ENCODE measurements at regions of chr1 and their contacts with region 1.

Region 1: DNA sequence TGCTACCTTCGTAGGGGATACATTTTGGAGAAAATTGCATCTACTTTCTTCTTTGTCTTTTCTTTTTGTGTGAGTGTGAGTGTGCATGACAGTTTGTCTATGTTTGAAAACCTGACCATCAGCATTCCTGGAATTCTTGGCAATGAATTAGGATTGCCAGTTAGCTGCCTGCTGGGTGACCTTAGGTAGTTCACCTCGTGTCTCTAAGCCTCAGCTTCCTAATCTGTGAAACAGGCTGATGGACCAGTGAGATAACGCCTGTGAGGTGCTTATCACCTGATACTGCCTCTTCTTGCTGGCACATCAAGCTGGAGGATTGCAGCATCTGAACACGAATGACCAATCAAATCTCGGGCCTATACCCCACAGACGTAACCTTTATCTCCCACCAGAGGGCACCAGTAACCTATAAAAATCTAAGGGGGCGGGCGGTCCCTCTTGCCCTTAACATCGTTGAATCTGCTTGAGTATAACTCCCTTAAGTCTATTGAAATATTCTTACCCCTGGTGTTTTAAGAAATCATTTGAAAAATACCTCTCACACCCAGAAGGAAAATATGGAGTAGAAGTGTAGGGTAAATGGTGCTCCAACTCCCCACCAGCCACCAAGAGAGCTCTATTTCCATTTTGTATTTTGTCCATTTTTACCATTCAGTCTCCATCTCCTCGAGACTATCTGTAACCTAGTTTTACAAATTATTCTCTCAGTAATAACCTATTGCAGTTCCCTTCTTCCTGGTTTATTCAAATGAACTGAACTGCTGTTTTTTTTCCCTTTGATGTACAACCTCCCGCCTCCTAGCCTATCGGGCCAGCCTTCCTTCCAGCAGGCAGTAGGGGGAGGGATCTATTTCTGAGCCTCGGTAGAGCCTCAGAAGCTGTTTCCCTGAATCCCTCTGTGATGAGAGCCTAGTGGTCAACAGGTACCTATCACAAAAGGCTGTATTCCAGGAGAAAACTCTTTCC is 49.7 kb downstream of the MDM4 start:
- DNase-seq: peak; percentile 55
- ATAC-seq: peak; percentile 85 to 88

Region 2: GRCh38 chr1:204714861-204715511 is 149.1 kb after region 1 on chr1:
- intact Hi-C with region 1: no loop called
- DNase-seq: no peak
- ATAC-seq: no peak

Region 3: GRCh38 chr1:204763706-204764427 is 198.0 kb after region 1 on chr1:
- intact Hi-C with region 1: loop called (anchors 2 to 5 kb)
- DNase-seq: peak; percentile 82
- ATAC-seq: peak; percentile 96 to 99

Region 4: GRCh38 chr1:204806943-204807687 is 241.2 kb after region 1 on chr1:
- intact Hi-C with region 1: loop called (anchors 1 to 2 kb)
- DNase-seq: peak; percentile 86
- ATAC-seq: peak; percentile 95 to 96